Activated CD4-positive, alpha-beta T cell treated with anti-CD3 and anti-CD28 coated beads, Interleukin-2, amount 10 ng/mL, durations not matched to agents 24 days and 14 days (primary cell): ENCODE measurements at regions of chr9 and their contacts with region 1.

Region 1: DNA sequence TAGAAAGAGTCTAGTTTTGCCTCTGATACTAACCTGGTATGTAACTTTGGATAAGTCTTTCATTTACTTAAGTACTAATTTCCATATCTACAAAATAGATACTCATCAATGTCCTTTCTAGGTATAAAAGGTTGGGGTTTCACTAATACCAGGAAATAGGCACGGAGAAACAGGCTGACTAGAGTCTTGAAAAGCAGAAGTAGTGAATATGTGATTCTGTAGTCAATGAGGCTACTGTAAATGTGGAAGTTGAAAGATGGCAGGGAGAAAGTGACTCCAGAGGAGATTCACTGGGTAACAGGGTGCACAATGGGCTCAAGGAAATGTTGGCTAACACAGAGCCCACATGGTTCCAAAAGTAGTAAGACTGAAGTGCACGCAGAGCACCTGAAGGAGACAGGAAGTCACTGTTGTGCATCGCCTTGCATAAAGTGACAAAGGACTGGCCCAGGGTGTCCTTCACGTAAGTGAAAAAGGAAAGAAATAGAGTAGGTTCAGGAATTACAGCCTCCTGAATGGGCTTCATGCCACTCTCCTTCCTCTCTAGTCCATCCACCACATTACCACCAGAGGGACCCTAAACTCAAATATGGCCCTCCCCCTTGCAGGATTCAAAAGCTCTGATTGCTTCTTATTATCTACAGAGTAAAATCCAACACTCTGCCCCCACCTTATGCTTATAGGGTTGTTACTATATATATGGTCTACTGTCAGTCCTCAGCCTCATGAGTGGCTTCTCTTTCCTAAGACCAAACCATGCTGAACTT is 288.0 kb upstream of the SMARCA2 start:
- DNase-seq: no peak
- H3K4me3 Mint-ChIP-seq: no peak overlapping the region
- H3K27ac Mint-ChIP-seq: no peak overlapping the region
- H3K4me1 Mint-ChIP-seq: no peaks in the 10 kb centered on the region
- H3K27me3 Mint-ChIP-seq: peaks cover 3% of the 10 kb centered on the region

Region 2: GRCh38 chr9:1804128-1804865 is 77.1 kb after region 1 on chr9:
- intact Hi-C with region 1: no loop called
- DNase-seq: peak; percentile 57
- H3K4me3 Mint-ChIP-seq: no peak overlapping the region
- H3K27ac Mint-ChIP-seq: no peak overlapping the region
- H3K4me1 Mint-ChIP-seq: peaks cover 4% of the 10 kb centered on the region
- H3K27me3 Mint-ChIP-seq: no peaks in the 10 kb centered on the region

Region 3: DNA sequence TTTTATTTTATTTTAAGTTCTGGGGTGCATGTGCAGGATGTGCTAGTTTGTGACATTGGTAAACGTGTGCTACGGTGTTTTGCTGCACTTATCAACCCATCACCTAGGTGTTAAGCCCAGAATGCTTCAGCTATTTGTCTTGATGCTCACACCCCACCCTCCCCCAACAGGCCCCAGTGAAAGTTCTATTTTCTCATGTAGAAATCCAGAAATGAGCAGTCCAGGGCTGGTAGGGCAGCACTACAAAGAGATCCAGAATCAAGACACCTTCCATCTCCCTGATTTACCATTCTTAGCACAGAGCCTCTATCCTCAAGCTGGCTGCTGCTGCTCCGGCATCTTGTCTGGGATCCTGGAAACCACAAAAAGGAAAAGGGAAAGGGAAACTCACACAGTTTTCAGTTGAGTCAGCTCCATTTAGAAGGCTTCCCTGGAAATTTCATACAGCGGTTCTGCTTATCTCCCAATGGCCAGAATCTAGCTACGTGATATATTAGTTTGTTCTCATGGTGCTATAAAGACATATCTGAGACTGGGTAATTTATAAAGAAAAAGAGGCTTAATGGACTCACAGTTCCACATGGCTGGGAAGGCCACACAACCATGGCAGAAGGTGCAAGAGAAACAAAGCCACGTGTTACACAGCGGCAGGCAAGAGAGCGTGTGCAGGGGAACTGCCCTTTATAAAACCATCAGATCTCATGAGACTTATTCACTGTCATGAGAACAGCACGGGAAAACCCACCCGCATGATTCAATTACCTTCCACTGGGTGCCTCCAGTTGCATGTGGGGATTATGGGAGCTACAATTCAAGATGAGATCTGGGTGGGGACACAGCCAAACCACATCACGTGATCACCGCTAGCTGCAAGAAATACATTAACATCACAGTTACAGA is 202.8 kb after region 1 on chr9:
- intact Hi-C with region 1: loop called (anchors 10 kb)
- DNase-seq: no peak
- H3K4me3 Mint-ChIP-seq: no peak overlapping the region
- H3K27ac Mint-ChIP-seq: no peak overlapping the region
- H3K4me1 Mint-ChIP-seq: no peaks in the 10 kb centered on the region
- H3K27me3 Mint-ChIP-seq: peaks cover 12% of the 10 kb centered on the region